Prostate gland (tissue), 2 donors: ENCODE measurements at regions of chr2 and their contacts with region 1.

Region 1: GRCh38 chr2:96138179-96139145 is at the start of gene ASTL:
- DNase-seq: no peak
- H3K4me3 ChIP-seq: no peak within 1 kb of the TSS
- H3K27ac ChIP-seq: no peak within 1 kb of the TSS
- H3K4me1 ChIP-seq: no peaks in the 10 kb centered on the region
- H3K27me3 ChIP-seq: no peaks in the 10 kb centered on the region
- CTCF ChIP-seq: peak in 3 of 4 experiments; percentile 50 to 78 (median 60)
- POLR2A ChIP-seq: no peak
- total RNA-seq, gene ASTL: 0.57 TPM in 1 of 2 donors, not detected in the other

Region 2: GRCh38 chr2:96174251-96175144 is 36.0 kb after region 1 on chr2:
- intact Hi-C with region 1: loop called (anchors 5 kb)
- DNase-seq: peak; percentile 75
- H3K4me3 ChIP-seq: no peak overlapping the region
- H3K27ac ChIP-seq: no peak overlapping the region
- H3K4me1 ChIP-seq: no peaks in the 10 kb centered on the region
- H3K27me3 ChIP-seq: no peaks in the 10 kb centered on the region
- CTCF ChIP-seq: peak; percentile 70 to 93 (median 88)
- POLR2A ChIP-seq: no peak

Region 3: GRCh38 chr2:96195410-96196066 is 57.1 kb after region 1 on chr2:
- intact Hi-C with region 1: no loop called
- DNase-seq: no peak
- H3K4me3 ChIP-seq: no peak overlapping the region
- H3K27ac ChIP-seq: no peak overlapping the region
- H3K4me1 ChIP-seq: no peaks in the 10 kb centered on the region
- H3K27me3 ChIP-seq: no peaks in the 10 kb centered on the region
- CTCF ChIP-seq: no peak
- POLR2A ChIP-seq: no peak

Region 4: GRCh38 chr2:96260404-96261260 is 122.2 kb after region 1 on chr2:
- intact Hi-C with region 1: loop called (anchors 5 kb)
- DNase-seq: peak; percentile 66
- H3K4me3 ChIP-seq: no peak overlapping the region
- H3K27ac ChIP-seq: peak overlapping the region; percentile 54 to 67
- H3K4me1 ChIP-seq: peaks cover 9% of the 10 kb centered on the region
- H3K27me3 ChIP-seq: no peaks in the 10 kb centered on the region
- CTCF ChIP-seq: peak in 2 of 4 experiments; percentile 14 to 34
- POLR2A ChIP-seq: no peak

Region 5: GRCh38 chr2:96608469-96609455 is 470.3 kb after region 1 on chr2:
- intact Hi-C with region 1: no loop called
- DNase-seq: no peak
- H3K4me3 ChIP-seq: no peak overlapping the region
- H3K27ac ChIP-seq: no peak overlapping the region
- H3K4me1 ChIP-seq: no peaks in the 10 kb centered on the region
- H3K27me3 ChIP-seq: no peaks in the 10 kb centered on the region
- CTCF ChIP-seq: no peak
- POLR2A ChIP-seq: no peak